Right ventricle myocardium inferior (tissue), 1 donor: ENCODE measurements at regions of chr2 and their contacts with region 1.

Region 1: GRCh38 chr2:200483729-200484198 is 26.1 kb downstream of the KCTD18 start:
- DNase-seq: no peak
- ATAC-seq: no peak

Region 2: GRCh38 chr2:199979832-199980628 is 503.7 kb before region 1 on chr2:
- intact Hi-C with region 1: loop called (anchors 1 kb)
- DNase-seq: peak; percentile 88
- ATAC-seq: peak; percentile 76

Region 3: GRCh38 chr2:201021914-201022313 is 538.1 kb after region 1 on chr2:
- intact Hi-C with region 1: no loop called
- DNase-seq: no peak
- ATAC-seq: no peak

Region 4: GRCh38 chr2:201109186-201109585 is 625.4 kb after region 1 on chr2:
- intact Hi-C with region 1: no loop called
- DNase-seq: no peak
- ATAC-seq: no peak